Colonic mucosa (tissue), 4 donors: ENCODE measurements at regions of chr12 and their contacts with region 1.

Region 1: DNA sequence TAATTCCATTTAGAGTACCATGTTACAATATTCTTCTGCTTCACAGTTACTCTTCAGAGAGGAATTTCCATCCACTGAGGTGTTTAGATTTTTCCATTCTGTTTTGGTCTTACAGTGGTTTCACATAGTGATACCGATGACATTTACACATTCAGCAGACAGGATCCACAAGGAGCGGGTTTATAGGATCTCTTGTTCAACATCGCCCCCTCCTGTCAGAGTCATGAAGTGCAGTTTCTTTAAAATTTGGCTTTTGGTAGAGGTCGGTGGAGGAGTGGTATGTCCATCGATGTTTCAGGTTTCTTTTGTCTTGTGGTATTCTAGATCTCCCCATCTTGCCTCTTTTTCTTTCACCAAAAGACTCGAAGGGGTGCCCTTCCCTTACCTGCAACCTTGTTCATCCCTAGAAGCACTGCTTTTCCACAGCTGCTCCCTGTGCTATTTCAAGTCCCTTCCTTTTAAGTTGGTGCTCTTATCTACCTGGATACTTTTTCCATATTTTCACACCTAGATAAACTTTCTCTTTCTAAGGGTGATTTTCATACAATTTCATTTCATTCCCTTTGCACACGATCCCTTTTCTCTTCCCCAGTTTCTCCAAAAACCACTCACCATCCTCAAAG is 181.3 kb downstream of the ITPR2 start:
- DNase-seq: peak; percentile 62
- H3K4me3 ChIP-seq: no peak overlapping the region
- H3K27ac ChIP-seq: no peak overlapping the region
- H3K4me1 ChIP-seq: no peaks in the 10 kb centered on the region
- H3K27me3 ChIP-seq: no peaks in the 10 kb centered on the region
- CTCF ChIP-seq: peak; percentile 66

Region 2: DNA sequence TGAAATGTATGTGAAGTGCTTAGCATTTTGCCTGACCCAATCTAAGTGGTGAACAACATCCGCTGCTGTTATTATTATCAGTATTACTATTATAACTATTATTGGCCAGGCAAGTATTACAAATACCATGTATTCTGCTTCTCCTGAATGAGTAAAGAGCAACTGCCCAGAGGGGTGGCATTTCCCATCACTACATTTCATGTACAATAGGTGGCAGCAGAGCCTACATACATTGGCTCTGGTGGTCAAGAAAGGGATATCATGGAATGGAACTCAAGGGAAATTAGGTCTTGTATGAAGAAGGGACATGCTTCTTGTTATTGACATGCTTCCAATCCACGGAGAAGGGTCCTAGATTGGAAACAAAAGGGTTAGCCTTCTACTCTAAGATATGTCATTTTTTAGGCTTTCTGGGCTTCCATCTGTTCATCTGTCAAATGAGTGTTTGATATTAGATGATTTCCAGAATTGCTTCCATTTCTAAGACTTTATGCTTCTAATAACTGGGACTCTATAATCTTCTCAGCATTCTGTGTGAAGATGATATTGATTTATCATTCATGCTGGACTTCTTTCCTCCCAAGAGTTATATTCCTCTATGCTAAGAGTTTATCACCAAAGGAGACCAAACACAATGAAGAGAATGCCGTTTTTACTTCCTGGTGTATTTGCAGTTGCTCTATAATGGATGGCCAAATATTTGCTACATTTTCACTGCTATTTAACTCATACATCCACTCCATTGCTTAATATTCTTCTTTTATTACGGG is 217.2 kb before region 1 on chr12:
- intact Hi-C with region 1: loop called (anchors 10 kb)
- DNase-seq: peak; percentile 29
- H3K4me3 ChIP-seq: no peak overlapping the region
- H3K27ac ChIP-seq: no peak overlapping the region
- H3K4me1 ChIP-seq: no peaks in the 10 kb centered on the region
- H3K27me3 ChIP-seq: no peaks in the 10 kb centered on the region
- CTCF ChIP-seq: peak; percentile 53

Region 3: GRCh38 chr12:26445909-26446308 is 205.8 kb before region 1 on chr12:
- intact Hi-C with region 1: no loop called
- DNase-seq: no peak
- H3K4me3 ChIP-seq: no peak overlapping the region
- H3K27ac ChIP-seq: no peak overlapping the region
- H3K4me1 ChIP-seq: no peaks in the 10 kb centered on the region
- H3K27me3 ChIP-seq: no peaks in the 10 kb centered on the region
- CTCF ChIP-seq: no peak

Region 4: GRCh38 chr12:26791301-26791791 is 139.7 kb after region 1 on chr12:
- intact Hi-C with region 1: no loop called
- DNase-seq: no peak
- H3K4me3 ChIP-seq: no peak overlapping the region
- H3K27ac ChIP-seq: peak overlapping the region; percentile 26
- H3K4me1 ChIP-seq: no peaks in the 10 kb centered on the region
- H3K27me3 ChIP-seq: no peaks in the 10 kb centered on the region
- CTCF ChIP-seq: no peak